Posterior cingulate gyrus (tissue), 11 donors: ENCODE measurements at regions of chr9 and their contacts with region 1.

Region 1: GRCh38 chr9:70962664-70963435 is 158.6 kb downstream of the TRPM3 start:
- DNase-seq: no peak

Region 2: DNA sequence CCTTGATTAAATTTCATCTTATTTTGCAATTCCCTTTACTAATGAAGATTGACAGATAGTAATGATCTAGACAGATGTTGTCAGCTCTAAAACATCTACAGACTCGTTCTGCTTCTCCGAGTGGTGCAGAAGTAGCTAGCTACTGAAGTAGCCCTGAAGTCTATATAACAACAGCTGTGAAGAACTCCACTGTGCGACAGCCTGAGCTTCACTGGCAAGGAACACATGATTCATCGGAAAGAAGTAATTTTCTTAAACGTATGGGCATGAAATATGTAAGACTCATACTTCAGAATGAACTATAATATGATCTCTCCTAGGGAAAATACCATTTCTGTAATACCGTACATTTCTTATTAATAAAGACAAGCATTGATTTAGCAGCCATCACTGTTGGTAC is 62.4 kb after region 1 on chr9:
- intact Hi-C with region 1: no loop called
- DNase-seq: peak in 1 of 10 donors; percentile 48

Region 3: GRCh38 chr9:71096421-71097108 is 133.7 kb after region 1 on chr9:
- intact Hi-C with region 1: loop called (anchors 10 kb)
- DNase-seq: peak in 3 of 10 donors; percentile 20 to 75 (median 28)